Activated CD8-positive, alpha-beta T cell treated with anti-CD3 and anti-CD28 coated beads for 36 hours (primary cell): ENCODE measurements at regions of chr3 and their contacts with region 1.

Region 1: GRCh38 chr3:152268555-152269425 is at the start of gene MBNL1:
- DNase-seq: peak; percentile 94
- ATAC-seq: peak; percentile 71
- H3K4me3 Mint-ChIP-seq: peak within 1 kb of the TSS; percentile 82
- H3K27ac Mint-ChIP-seq: peak within 1 kb of the TSS; percentile 97
- H3K4me1 Mint-ChIP-seq: peaks cover 48% of the 10 kb centered on the region
- H3K27me3 Mint-ChIP-seq: no peaks in the 10 kb centered on the region
- CTCF ChIP-seq: no peak
- total RNA-seq, gene MBNL1: 341 to 360 TPM

Region 2: GRCh38 chr3:152127058-152127457 is 141.7 kb before region 1 on chr3:
- CTCF ChIA-PET with region 1: no interaction called
- POLR2A ChIA-PET with region 1: no interaction called
- intact Hi-C with region 1: loop called (anchors 10 kb)
- DNase-seq: peak; percentile 47
- ATAC-seq: peak; percentile 98
- H3K4me3 Mint-ChIP-seq: no peak overlapping the region
- H3K27ac Mint-ChIP-seq: no peak overlapping the region
- H3K4me1 Mint-ChIP-seq: peaks cover 13% of the 10 kb centered on the region
- H3K27me3 Mint-ChIP-seq: no peaks in the 10 kb centered on the region
- CTCF ChIP-seq: no peak

Region 3: GRCh38 chr3:152205097-152205593 is 63.6 kb before region 1 on chr3:
- CTCF ChIA-PET with region 1: no interaction called
- POLR2A ChIA-PET with region 1: interaction called, 39 read pairs
- intact Hi-C with region 1: no loop called
- DNase-seq: no peak
- ATAC-seq: peak; percentile 6
- H3K4me3 Mint-ChIP-seq: peak overlapping the region; percentile 78
- H3K27ac Mint-ChIP-seq: peak overlapping the region; percentile 90
- H3K4me1 Mint-ChIP-seq: peaks cover 59% of the 10 kb centered on the region
- H3K27me3 Mint-ChIP-seq: no peaks in the 10 kb centered on the region
- CTCF ChIP-seq: no peak

Region 4: DNA sequence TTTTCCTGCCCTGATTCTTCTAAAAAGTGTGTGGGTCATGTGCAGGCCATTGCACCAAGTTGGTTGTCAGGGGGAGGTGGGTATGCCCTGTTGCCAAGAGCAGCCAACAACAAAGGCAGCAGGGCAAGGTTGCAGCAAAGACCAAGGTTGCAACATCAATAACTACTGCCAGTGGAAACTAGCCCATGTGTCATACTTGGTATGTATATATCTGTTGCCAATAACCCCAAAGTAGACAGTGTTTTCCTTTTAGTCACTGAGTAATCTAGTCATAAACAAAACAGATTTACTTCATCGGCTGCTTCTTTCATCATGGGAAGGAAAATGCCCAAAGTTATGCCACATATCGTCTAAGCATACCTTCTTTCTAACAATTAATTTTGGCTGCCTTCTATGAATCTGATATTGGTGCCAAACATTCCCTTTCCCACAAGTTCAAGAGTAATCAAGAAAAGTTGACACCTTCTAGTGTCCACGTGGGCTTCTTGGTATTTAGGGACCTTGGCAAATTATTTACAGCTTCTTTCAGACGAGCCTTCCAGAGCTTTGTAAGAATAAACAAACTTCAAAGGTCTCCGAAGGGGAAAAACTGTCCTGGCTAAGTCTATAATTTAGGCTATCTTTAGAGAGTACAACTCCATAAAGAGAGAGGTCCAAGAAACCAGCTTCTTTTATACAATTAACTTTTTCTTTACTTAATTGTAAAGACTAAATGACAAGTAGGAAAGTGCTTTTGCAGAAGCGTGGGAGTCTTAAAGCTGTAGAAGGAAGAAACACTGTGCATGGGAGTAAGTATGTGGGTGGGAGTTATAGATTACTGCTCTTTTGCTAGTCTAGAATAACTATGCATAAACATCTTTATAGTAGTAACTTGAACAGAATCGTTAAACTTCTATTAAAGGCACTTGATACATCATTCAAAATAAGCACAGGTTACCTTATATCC is 10.1 kb before region 1 on chr3:
- CTCF ChIA-PET with region 1: interaction called, 7 read pairs
- POLR2A ChIA-PET with region 1: interaction called, 81 read pairs
- intact Hi-C with region 1: no loop called
- DNase-seq: peak; percentile 82
- ATAC-seq: peak; percentile 76
- H3K4me3 Mint-ChIP-seq: peak overlapping the region; percentile 66
- H3K27ac Mint-ChIP-seq: peak overlapping the region; percentile 96
- H3K4me1 Mint-ChIP-seq: peaks cover 82% of the 10 kb centered on the region
- H3K27me3 Mint-ChIP-seq: no peaks in the 10 kb centered on the region
- CTCF ChIP-seq: no peak

Region 5: DNA sequence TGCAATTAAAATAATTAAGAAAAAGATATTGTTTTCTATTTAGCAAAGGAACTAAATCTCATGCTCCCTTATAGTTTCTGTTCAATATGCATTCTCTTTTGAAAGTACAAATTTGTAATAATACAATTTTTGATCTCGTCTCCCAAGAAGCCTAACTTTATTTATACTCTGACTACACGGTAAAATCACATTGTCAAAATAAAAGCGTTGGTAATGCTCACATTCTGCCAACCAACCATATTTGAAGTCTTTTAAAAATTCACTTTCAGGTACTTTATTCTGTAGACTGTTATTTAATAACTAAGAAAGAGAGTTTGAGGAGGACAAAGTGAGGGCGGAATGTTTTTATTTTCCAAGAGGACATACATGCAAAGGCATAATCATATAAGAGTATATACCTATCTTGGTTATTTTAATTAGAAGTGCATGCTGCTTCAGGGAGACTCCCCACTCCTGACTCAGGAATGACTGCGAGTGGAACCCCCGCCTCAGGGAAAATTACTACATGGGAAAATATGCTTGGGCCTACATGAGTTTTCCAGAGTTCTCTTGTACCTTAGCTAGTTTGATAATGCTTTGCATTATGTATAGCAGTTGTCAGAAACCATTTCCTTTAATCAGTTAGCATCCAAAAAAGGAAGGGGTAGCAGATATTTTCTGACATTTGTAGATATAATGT is 19.2 kb after region 1 on chr3:
- CTCF ChIA-PET with region 1: interaction called, 6 read pairs
- POLR2A ChIA-PET with region 1: interaction called, 19 read pairs
- intact Hi-C with region 1: loop called (anchors 2 kb)
- DNase-seq: no peak
- ATAC-seq: no peak
- H3K4me3 Mint-ChIP-seq: peak overlapping the region; percentile 44
- H3K27ac Mint-ChIP-seq: peak overlapping the region; percentile 21
- H3K4me1 Mint-ChIP-seq: peaks cover 78% of the 10 kb centered on the region
- H3K27me3 Mint-ChIP-seq: no peaks in the 10 kb centered on the region
- CTCF ChIP-seq: no peak

Region 6: DNA sequence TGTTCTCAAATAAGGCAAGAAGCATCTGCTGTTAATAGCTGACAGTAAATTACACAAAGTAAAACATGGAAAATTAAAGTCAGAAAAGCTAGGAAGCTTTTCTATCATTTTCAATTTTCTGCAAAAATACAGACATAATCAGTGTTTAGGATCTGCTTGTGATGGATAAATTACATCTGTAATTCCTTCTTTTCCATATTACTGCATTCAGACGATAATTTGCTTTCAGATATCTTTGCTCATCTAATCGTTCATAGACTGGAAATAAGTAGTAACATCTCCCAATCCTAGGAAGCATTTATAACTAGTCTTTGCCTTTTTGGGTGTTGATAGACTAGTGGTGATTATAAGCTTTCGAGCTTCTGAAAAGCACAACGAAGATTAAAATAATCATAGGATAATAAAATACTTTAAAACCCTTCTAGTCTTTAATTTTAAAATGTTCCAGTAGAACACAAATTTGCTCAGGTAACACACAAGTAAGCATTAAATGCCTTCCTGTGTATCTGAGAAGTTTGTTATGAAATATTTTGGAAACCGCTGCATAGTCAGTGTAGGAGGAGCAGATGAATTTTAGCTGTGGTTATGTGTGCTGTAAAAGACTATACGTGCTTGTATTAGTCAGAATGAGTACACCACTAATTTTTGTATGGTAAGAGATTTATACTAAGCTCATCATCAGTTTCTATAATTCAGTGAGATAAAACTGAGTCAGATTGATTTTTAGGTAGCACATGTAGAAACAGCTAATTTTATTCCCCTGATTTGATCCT is 40.9 kb after region 1 on chr3:
- CTCF ChIA-PET with region 1: interaction called, 4 read pairs
- POLR2A ChIA-PET with region 1: interaction called, 11 read pairs
- intact Hi-C with region 1: no loop called
- DNase-seq: no peak
- ATAC-seq: peak; percentile 93
- H3K4me3 Mint-ChIP-seq: no peak overlapping the region
- H3K27ac Mint-ChIP-seq: peak overlapping the region; percentile 70
- H3K4me1 Mint-ChIP-seq: peaks cover 75% of the 10 kb centered on the region
- H3K27me3 Mint-ChIP-seq: no peaks in the 10 kb centered on the region
- CTCF ChIP-seq: no peak

Region 7: DNA sequence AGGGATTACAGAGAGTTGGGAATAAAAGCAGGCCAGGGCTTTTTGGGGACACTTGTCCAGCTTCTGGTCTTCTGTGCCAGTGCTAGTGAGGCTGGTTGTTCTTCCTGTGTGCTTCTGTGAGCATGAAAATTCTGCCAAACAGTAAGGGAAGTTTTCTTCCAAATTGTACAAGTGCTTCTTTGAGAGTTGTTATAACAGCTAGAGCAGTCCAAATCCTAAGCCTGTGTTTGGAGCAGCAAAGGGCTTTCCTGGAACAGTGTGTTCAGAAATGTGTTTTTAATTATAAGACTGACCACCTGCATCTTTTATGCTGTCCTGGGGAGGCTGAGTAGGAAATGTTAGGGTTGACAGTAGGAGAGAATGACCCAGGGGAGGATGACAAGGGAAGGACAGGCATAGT is 343.1 kb after region 1 on chr3:
- CTCF ChIA-PET with region 1: no interaction called
- POLR2A ChIA-PET with region 1: no interaction called
- intact Hi-C with region 1: no loop called
- DNase-seq: no peak
- ATAC-seq: no peak
- H3K4me3 Mint-ChIP-seq: no peak overlapping the region
- H3K27ac Mint-ChIP-seq: no peak overlapping the region
- H3K4me1 Mint-ChIP-seq: no peaks in the 10 kb centered on the region
- H3K27me3 Mint-ChIP-seq: peaks cover 5% of the 10 kb centered on the region
- CTCF ChIP-seq: no peak